Left ventricle myocardium inferior (tissue), 1 donor: ENCODE measurements at regions of chr15 and their contacts with region 1.

Region 1: DNA sequence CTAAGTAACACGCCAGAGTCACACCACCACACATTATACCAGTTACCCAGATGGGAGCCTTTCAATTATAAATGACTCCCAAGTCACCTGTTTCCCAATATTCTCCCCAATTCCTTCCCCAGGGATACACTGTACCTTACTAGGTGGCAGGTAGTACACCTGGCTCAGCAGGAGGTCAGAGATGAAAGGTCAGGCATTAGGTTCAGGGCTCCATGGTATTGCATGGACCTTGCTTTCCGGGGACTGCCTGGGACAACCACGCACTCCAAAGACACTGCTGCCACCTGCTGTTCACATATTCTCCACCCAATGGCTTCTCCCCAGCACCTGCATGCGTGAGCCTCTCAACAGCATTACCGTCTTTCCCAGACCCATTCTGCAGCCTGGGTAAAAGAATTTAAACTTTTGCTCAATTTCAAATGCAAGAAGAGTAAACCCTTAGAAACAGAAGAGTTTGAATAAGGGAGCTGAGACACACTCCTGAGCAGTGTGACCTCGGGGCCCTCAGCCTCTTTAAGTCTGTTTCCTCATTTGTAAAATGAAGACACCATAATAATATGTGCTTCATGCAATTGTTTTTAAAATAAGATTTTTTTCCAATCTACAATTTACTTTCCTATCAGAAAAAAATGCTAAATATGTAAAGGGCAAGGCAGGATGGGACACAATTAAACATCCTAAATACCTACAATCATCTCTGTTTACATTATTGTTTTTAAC is 28.0 kb upstream of the LACTB start:
- DNase-seq: peak; percentile 75
- H3K4me3 ChIP-seq: no peak overlapping the region
- H3K27ac ChIP-seq: peak overlapping the region; percentile 26
- H3K4me1 ChIP-seq: peaks cover 34% of the 10 kb centered on the region
- H3K27me3 ChIP-seq: no peaks in the 10 kb centered on the region
- CTCF ChIP-seq: peak; percentile 93

Region 2: GRCh38 chr15:62782039-62782791 is 311.4 kb before region 1 on chr15:
- intact Hi-C with region 1: loop called (anchors 5 kb)
- DNase-seq: peak; percentile 72
- H3K4me3 ChIP-seq: no peak overlapping the region
- H3K27ac ChIP-seq: peak overlapping the region; percentile 87
- H3K4me1 ChIP-seq: peaks cover 47% of the 10 kb centered on the region
- H3K27me3 ChIP-seq: no peaks in the 10 kb centered on the region
- CTCF ChIP-seq: peak; percentile 77

Region 3: DNA sequence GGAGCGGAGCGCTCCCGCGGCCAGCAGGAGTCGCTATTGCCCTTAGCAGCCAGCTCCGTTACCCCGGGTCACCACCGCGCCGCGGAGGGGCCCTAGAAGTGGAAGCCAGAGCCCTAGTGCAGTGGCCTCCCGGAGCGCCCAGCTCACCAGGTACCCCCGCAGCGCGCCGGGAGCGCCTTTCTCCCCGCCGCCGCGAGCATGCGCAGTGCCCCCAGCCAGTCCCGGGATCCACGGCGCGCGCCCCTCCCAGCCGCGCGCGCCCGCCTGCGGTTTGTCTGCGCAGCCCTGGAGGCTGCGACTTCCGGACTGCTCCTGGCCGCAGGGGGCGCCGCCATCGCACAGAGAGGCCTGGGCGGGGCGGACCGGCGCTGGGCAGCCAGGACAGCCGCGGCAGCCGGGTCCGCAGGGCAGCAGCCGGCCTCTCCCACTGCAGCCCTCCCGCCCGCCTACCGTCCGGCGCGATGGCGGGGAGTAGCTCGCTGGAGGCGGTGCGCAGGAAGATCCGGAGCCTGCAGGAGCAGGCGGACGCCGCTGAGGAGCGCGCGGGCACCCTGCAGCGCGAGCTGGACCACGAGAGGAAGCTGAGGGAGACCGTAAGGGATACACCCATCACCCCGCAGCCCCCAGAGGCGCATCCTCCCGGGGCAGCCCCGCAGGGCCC is 45.4 kb before region 1 on chr15:
- intact Hi-C with region 1: loop called (anchors 5 kb)
- DNase-seq: peak; percentile 92
- H3K4me3 ChIP-seq: peak overlapping the region; percentile 83
- H3K27ac ChIP-seq: peak overlapping the region; percentile 99
- H3K4me1 ChIP-seq: peaks cover 92% of the 10 kb centered on the region
- H3K27me3 ChIP-seq: peaks cover 5% of the 10 kb centered on the region
- CTCF ChIP-seq: peak; percentile 88

Region 4: GRCh38 chr15:63146669-63147068 is 53.0 kb after region 1 on chr15:
- intact Hi-C with region 1: no loop called
- DNase-seq: no peak
- H3K4me3 ChIP-seq: no peak overlapping the region
- H3K27ac ChIP-seq: no peak overlapping the region
- H3K4me1 ChIP-seq: peaks cover 17% of the 10 kb centered on the region
- H3K27me3 ChIP-seq: no peaks in the 10 kb centered on the region
- CTCF ChIP-seq: no peak